ENCODE measurements at regions of chr7 and their contacts with region 1.

Region 1: GRCh38 chr7:74449809-74450397 is 3.8 kb upstream of the GTF2IRD1 start:
- DNase-seq: peak; percentile 75
- H3K4me3 Mint-ChIP-seq: no peak overlapping the region
- H3K27ac Mint-ChIP-seq: peak overlapping the region; percentile 46
- H3K4me1 Mint-ChIP-seq: peaks cover 14% of the 10 kb centered on the region
- H3K27me3 Mint-ChIP-seq: no peaks in the 10 kb centered on the region

Region 2: DNA sequence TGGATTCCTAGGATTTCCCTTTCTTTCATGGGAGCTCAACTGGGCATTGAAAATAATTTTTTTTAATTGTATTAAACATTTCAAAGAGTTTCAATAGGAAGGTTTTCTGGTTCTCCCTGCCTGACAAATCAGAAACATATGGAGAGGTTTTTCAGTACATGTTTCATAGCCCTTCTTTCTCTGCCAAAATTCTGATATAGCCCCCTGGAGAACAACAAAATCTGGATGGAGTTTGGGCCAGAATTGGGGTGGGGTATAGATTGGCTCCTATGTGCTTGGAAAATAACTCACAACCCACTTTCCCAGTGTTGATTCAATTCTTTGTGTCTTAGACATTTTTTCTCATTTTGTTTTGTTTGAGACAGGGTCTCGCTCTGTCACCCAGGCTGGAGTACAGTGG is 300.3 kb before region 1 on chr7:
- CTCF ChIA-PET with region 1: no interaction called
- POLR2A ChIA-PET with region 1: no interaction called
- intact Hi-C with region 1: no loop called
- DNase-seq: no peak
- H3K4me3 Mint-ChIP-seq: no peak overlapping the region
- H3K27ac Mint-ChIP-seq: no peak overlapping the region
- H3K4me1 Mint-ChIP-seq: no peaks in the 10 kb centered on the region
- H3K27me3 Mint-ChIP-seq: peaks cover 2% of the 10 kb centered on the region

Region 3: DNA sequence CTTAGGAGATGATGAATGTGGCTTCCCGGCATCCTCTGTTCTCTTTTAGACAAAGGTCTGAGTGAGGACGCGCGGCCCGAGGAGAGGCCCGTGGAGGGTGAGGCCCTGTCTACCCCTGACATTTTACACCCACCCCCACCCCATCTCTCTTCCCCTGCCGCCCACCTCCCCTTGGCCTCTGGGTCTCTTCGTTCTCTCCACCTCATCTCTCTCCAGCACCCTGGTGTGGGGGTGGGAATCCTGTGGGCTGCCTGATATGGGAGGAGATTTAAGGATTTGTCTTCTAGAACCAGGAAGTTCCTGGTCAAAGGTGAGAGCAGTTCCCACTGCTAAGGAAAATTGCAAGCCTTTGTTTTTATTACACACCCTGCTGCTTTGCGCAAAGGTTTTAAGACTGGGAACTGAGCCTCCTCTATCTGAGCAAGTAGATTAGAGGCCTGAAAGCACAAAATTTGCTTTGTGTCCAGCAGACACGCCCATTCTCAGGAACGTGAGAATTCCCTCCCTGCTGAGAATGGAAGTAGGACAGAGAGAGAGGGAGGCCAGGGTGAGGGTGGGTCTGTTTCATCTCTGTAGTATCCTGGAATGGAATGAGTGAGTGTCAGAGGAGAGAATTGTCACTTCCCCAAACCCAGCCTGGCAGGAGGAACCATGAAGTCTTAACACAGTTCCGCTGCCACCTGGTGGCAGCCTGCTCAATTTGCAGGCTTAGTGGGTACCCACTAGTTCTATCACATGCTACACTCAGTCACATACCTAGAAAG is 95.0 kb after region 1 on chr7:
- CTCF ChIA-PET with region 1: interaction called, 9 read pairs
- POLR2A ChIA-PET with region 1: no interaction called
- intact Hi-C with region 1: loop called (anchors 1 kb)
- DNase-seq: peak; percentile 58
- H3K4me3 Mint-ChIP-seq: no peak overlapping the region
- H3K27ac Mint-ChIP-seq: no peak overlapping the region
- H3K4me1 Mint-ChIP-seq: no peaks in the 10 kb centered on the region
- H3K27me3 Mint-ChIP-seq: no peaks in the 10 kb centered on the region

Region 4: DNA sequence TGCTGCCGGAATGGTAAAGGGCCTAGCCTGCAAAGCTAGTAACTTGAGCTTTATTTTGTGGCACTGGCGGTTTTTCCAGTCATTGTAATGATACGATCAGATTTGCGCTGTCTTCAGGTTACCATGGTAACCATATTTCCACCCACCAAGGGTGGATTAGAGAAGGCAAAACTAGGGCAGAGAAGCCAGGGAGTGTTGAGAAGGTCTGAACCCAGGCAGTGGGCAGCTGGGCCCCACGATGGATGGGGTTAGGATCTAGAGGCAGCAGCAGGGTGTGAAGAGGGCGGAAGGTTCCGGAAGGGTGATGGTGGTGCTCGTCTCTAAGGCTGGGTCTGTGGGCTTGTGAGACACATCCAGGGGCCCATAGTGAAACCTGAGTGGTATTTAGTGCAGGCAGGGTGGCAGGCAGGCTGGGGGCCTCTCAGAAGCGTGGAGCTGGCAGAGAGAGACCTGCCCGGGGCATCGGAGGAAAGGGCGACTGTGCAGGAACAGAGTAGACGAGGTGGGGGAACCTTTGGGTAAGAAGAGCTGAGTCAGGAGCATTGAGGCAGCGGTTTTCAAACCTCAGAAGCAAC is 119.7 kb after region 1 on chr7:
- CTCF ChIA-PET with region 1: interaction called, 27 read pairs
- POLR2A ChIA-PET with region 1: interaction called, 3 read pairs
- intact Hi-C with region 1: loop called (anchors 1 kb)
- DNase-seq: peak; percentile 58
- H3K4me3 Mint-ChIP-seq: peak overlapping the region; percentile 17
- H3K27ac Mint-ChIP-seq: peak overlapping the region; percentile 80
- H3K4me1 Mint-ChIP-seq: peaks cover 11% of the 10 kb centered on the region
- H3K27me3 Mint-ChIP-seq: no peaks in the 10 kb centered on the region

Region 5: DNA sequence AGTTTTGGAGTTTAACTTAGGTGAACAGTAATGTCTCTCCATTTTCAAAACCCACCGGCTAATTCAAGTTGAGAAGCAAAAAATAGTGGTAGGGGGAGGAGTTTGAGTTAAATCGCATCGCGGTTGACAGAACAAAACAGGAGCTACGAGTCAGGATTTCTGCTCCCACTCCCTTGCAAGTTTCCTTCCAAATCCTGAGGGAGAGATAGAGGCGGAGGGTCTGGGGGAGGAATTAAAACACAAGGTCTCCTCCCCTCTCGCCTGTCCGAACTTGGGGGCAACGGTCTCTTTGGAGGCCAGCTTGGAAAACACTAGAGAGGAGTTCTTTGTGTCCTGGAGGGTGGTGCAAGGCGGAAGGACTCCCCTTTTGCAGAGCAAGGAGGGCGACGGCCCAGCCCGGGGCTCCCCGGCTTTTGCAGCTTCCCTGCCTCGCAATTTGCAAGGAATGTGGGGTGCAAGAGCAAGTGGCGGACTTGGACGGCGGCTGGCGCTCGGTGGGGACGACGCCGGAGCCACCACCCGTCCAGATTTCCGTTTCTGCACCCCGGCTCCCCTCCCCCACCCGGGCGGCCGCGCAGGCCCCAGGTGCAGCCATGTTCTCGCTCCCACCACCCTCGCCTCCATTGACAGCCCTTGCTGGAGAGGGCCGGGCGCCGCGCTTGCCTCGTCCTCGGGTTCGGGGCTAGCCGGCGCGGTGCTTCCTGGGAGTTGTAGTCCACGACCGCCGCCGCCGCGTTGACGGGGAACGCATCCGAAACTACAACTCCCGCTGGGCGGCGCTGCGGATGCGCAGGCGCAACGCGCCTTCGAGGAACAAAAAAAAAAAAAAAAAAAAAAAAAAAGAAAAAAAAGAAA is 207.2 kb after region 1 on chr7:
- CTCF ChIA-PET with region 1: no interaction called
- POLR2A ChIA-PET with region 1: no interaction called
- intact Hi-C with region 1: loop called (anchors 2 kb)
- DNase-seq: peak; percentile 98
- H3K4me3 Mint-ChIP-seq: peak overlapping the region; percentile 79
- H3K27ac Mint-ChIP-seq: peak overlapping the region; percentile 74
- H3K4me1 Mint-ChIP-seq: peaks cover 45% of the 10 kb centered on the region
- H3K27me3 Mint-ChIP-seq: no peaks in the 10 kb centered on the region